ENCODE measurements at regions of chr10 and their contacts with region 1.

Region 1: GRCh38 chr10:131885391-131886161 is 15.2 kb upstream of the PPP2R2D start:
- DNase-seq: peak; percentile 71 to 89 (median 77)
- ATAC-seq: peak; percentile 87 to 98 (median 94)
- H3K4me3 ChIP-seq: no peak overlapping the region
- H3K27ac ChIP-seq: no peak overlapping the region
- H3K4me1 ChIP-seq: peaks cover 0 to 8% (median 5%) of the 10 kb centered on the region in 12 donors
- H3K27me3 ChIP-seq: peaks cover 0 to 28% (median 0%) of the 10 kb centered on the region in 9 donors
- CTCF ChIP-seq: peak; percentile 91 to 99 (median 96)
- POLR2A ChIP-seq: no peak

Region 2: GRCh38 chr10:131981429-131982184 is 96.0 kb after region 1 on chr10 and contains the start of gene BNIP3:
- intact Hi-C with region 1: no loop called
- DNase-seq: peak; percentile 95 to 99 (median 96)
- ATAC-seq: peak; percentile 89 to 95 (median 92)
- H3K4me3 ChIP-seq: peak within 1 kb of the TSS; percentile 72 to 99 (median 90)
- H3K27ac ChIP-seq: peak within 1 kb of the TSS; percentile 6 to 90 (median 80)
- H3K4me1 ChIP-seq: peaks cover 0 to 51% (median 28%) of the 10 kb centered on the region in 12 donors
- H3K27me3 ChIP-seq: peaks cover 0 to 9% (median 0%) of the 10 kb centered on the region in 9 donors
- CTCF ChIP-seq: peak in 1 of 12 donors; percentile 14
- POLR2A ChIP-seq: peak; percentile 95 to 99
- total RNA-seq, gene BNIP3: 97.1 to 711 (median 130) TPM

Region 3: DNA sequence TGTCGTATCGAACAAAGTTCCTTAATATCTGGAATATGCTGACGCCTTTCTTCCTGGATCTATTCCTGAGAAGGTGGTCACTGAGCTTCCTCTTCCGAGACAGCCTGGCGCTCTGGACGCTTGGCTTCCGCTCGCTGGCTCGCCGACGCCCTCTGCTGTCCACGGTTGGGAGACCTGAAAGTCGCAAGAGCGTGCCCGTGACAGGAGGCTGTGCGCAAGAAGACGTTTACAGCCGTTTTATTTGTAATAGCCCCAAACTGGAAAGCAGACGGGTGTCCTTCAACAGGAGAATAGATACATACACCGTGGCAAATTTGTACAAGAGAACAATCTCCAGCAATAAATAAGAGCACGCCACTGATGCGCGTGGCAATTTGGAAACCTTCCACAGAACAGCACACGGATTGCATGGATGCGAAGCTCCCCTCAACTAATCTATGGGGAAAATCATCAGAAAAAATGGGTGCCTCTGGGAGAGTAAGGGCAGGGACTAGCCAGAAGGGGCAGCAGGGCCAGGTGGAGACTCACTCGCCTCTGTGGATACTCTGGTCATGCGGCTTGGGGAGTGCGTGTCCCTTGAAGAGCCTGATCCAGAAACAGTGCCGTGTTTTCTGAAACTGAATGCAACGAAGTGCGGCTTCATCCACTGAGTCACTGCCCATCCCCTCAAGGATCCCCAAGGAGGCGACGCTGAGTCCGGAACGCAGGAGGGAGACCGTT is 137.7 kb after region 1 on chr10:
- intact Hi-C with region 1: loop called (anchors 1 to 2 kb)
- DNase-seq: peak; percentile 74 to 90 (median 80)
- ATAC-seq: peak; percentile 75 to 97 (median 87)
- H3K4me3 ChIP-seq: peak overlapping the region in 11 of 12 donors; percentile 9 to 53 (median 36)
- H3K27ac ChIP-seq: no peak overlapping the region
- H3K4me1 ChIP-seq: peaks cover 0 to 11% (median 4%) of the 10 kb centered on the region in 12 donors
- H3K27me3 ChIP-seq: peaks cover 0 to 27% (median 4%) of the 10 kb centered on the region in 9 donors
- CTCF ChIP-seq: peak; percentile 85 to 98 (median 90)
- POLR2A ChIP-seq: no peak